Activated naive CD4-positive, alpha-beta T cell treated with anti-CD3 and anti-CD28 coated beads for 36 hours (primary cell): ENCODE measurements at regions of chr19 and their contacts with region 1.

Region 1: GRCh38 chr19:39679056-39679790 is 23.5 kb downstream of the LGALS16 start:
- DNase-seq: peak; percentile 71
- H3K4me3 Mint-ChIP-seq: peak overlapping the region; percentile 69
- H3K27ac Mint-ChIP-seq: peak overlapping the region; percentile 84
- H3K4me1 Mint-ChIP-seq: peaks cover 50% of the 10 kb centered on the region
- H3K27me3 Mint-ChIP-seq: no peaks in the 10 kb centered on the region

Region 2: GRCh38 chr19:39692166-39692565 is 12.9 kb after region 1 on chr19:
- CTCF ChIA-PET with region 1: interaction called, 3 read pairs
- intact Hi-C with region 1: loop called (anchors 1 kb)
- DNase-seq: peak; percentile 57
- H3K4me3 Mint-ChIP-seq: no peak overlapping the region
- H3K27ac Mint-ChIP-seq: no peak overlapping the region
- H3K4me1 Mint-ChIP-seq: peaks cover 2% of the 10 kb centered on the region
- H3K27me3 Mint-ChIP-seq: no peaks in the 10 kb centered on the region

Region 3: GRCh38 chr19:39704181-39705044 is 25.2 kb after region 1 on chr19 and contains the start of gene LGALS14:
- CTCF ChIA-PET with region 1: interaction called, 5 read pairs
- intact Hi-C with region 1: loop called (anchors 1 kb)
- DNase-seq: peak; percentile 60
- H3K4me3 Mint-ChIP-seq: peak within 1 kb of the TSS; percentile 34
- H3K27ac Mint-ChIP-seq: peak within 1 kb of the TSS; percentile 79
- H3K4me1 Mint-ChIP-seq: peaks cover 39% of the 10 kb centered on the region
- H3K27me3 Mint-ChIP-seq: no peaks in the 10 kb centered on the region
- total RNA-seq, gene LGALS14: 1.2 to 2.4 TPM

Region 4: GRCh38 chr19:39765091-39766076 is 86.2 kb after region 1 on chr19:
- CTCF ChIA-PET with region 1: interaction called, 44 read pairs
- intact Hi-C with region 1: loop called (anchors 1 kb)
- DNase-seq: peak; percentile 48
- H3K4me3 Mint-ChIP-seq: no peak overlapping the region
- H3K27ac Mint-ChIP-seq: no peak overlapping the region
- H3K4me1 Mint-ChIP-seq: no peaks in the 10 kb centered on the region
- H3K27me3 Mint-ChIP-seq: no peaks in the 10 kb centered on the region

Region 5: GRCh38 chr19:39818626-39819097 is 139.4 kb after region 1 on chr19:
- CTCF ChIA-PET with region 1: no interaction called
- intact Hi-C with region 1: no loop called
- DNase-seq: no peak
- H3K4me3 Mint-ChIP-seq: no peak overlapping the region
- H3K27ac Mint-ChIP-seq: no peak overlapping the region
- H3K4me1 Mint-ChIP-seq: peaks cover 7% of the 10 kb centered on the region
- H3K27me3 Mint-ChIP-seq: no peaks in the 10 kb centered on the region

Region 6: GRCh38 chr19:39941615-39942365 is 262.6 kb after region 1 on chr19:
- CTCF ChIA-PET with region 1: no interaction called
- intact Hi-C with region 1: loop called (anchors 5 kb)
- DNase-seq: peak; percentile 75
- H3K4me3 Mint-ChIP-seq: peak overlapping the region; percentile 46
- H3K27ac Mint-ChIP-seq: peak overlapping the region; percentile 74
- H3K4me1 Mint-ChIP-seq: peaks cover 74% of the 10 kb centered on the region
- H3K27me3 Mint-ChIP-seq: no peaks in the 10 kb centered on the region